ENCODE measurements at regions of chr17 and their contacts with region 1.

Region 1: DNA sequence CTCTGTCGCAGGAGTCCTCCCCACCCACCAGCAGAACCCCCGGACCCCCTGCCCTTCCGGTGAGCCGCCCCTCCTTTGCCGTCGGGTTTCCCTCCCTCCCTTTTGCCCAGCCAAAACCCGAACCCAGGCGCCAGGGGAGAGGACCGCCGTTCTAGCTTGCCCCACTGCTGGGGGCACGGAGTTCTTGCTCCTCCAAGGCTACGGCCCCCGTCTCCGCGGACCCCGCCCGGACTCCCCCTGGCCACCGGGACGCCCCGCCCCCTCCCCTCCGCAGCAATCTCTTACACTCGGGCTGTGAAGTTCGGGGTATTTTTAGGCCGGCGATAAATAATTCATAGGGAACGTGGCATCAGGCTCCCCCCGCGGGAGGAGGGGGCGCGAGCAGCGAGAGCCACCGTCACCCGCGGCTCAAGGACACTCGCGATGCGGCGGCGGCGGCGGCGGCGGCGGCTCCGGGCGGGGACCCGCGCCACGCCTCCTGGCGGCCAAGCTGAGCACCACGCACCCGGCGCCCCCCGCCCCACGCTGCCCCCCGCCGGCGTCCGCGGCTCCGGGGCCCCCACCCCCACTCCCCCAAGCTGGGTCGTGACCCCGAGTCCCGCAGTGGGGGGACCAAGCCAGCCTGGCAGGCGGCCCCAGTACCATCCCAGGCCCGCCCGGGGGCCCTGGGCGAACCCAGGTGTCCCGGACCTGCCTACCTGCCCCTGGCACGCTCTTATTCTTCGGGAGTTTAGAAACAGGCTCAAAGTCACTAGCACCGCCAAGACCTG is at the start of gene GRIN2C:
- DNase-seq: no peak
- ATAC-seq: peak; percentile 3 to 9
- total RNA-seq, gene GRIN2C: 25.2 to 38.8 TPM

Region 2: DNA sequence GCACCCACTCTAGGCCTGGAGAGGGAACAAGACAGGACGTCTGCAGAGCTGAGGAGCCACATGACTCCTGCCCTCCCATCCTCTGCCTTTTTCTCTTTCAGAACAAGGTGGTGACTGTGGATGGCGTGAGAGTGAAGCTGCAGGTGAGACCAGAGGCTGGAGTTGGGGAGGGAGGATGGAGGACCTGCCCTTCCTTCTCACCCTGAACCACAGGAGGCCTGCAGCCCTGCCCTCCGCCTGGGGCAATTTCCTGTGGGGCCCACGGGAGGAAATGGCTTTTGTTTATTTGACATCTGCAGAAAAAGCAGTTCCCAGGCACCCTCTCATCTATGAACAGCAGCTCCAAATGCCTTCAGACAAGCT is 117.5 kb before region 1 on chr17:
- intact Hi-C with region 1: loop called (anchors 2 to 10 kb)
- DNase-seq: no peak
- ATAC-seq: no peak

Region 3: DNA sequence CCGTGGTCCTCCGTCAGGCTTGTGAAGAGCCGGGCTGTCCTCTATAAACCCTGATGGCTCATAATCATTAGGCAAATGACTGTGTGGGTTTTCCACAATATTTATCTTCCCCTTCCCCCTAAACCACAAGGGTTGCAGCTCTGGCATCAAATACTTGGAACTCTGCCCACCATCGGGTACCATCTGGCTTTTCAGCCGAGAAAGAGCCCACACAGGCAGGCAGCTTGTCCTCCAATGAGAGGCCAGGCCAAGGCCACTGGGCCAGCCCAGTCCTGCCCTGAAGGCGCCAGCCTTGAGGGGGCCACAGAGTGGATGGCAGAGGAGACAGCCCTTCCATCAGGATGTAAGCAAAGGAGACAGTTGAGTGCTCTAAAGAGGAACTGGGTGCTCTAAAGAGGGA is 51.7 kb before region 1 on chr17:
- intact Hi-C with region 1: loop called in 1 of 2 experiments (anchors 5 kb)
- DNase-seq: no peak
- ATAC-seq: no peak

Measured in left cardiac atrium (tissue), 4 donors.